ENCODE measurements at regions of chr12 and their contacts with region 1.

Region 1: GRCh38 chr12:19561411-19561961 is 122.2 kb downstream of the AEBP2 start:
- DNase-seq: no peak
- H3K4me3 ChIP-seq: no peak overlapping the region
- CTCF ChIP-seq: no peak

Region 2: DNA sequence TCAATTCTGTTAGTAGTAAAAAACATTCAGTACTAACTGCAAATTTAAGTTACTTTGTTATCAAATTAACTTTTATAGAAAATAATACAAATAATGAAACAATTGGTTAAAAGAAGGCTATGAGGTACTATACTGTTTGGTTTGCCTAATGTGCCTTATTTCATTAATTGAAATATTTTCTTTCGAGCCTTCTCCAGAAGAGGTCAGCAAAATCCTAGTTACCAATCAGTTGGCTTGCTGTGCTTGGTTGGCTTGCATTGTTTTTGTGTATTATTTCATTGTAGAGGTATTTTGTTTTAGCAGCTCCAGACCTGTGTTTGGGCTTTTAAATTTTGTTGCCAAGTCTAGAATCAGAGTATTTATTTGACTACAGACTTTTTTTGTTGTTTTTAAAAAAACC is 53.7 kb before region 1 on chr12:
- CTCF ChIA-PET with region 1: no interaction called
- POLR2A ChIA-PET with region 1: no interaction called
- DNase-seq: no peak
- H3K4me3 ChIP-seq: no peak overlapping the region
- CTCF ChIP-seq: peak; percentile 13

Region 3: GRCh38 chr12:19572920-19573558 is 11.6 kb after region 1 on chr12:
- CTCF ChIA-PET with region 1: interaction called, 30 read pairs
- POLR2A ChIA-PET with region 1: no interaction called
- DNase-seq: peak; percentile 12
- H3K4me3 ChIP-seq: no peak overlapping the region
- CTCF ChIP-seq: peak; percentile 48